ENCODE measurements at regions of chr18 and their contacts with region 1.

Region 1: DNA sequence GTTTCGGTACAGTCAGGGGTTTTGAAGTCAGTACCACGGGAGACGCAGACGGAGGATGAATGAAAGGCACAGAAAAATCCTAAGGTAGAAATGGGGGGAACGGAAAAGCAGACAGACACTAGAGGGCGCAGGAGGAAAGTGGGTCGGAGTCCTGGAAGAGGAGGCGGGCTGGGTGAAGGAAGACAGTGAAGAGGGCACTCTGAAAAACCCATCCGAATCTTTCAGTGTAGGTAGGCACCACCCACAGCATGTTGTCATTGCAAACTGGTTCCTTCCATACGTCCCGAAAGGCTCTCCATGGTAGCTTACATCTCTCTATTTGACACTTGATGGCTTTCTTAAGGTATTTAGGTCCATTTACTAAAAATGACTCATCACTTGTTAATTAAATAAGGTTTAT is 18.5 kb upstream of the ZNF236 start:
- DNase-seq: peak; percentile 52 to 84 (median 68)
- ATAC-seq: peak; percentile 85
- H3K4me3 ChIP-seq: no peak overlapping the region
- H3K4me3 Mint-ChIP-seq: no peak overlapping the region
- H3K27ac ChIP-seq: no peak overlapping the region
- H3K27ac Mint-ChIP-seq: no peak overlapping the region
- H3K4me1 ChIP-seq: peaks cover 18% of the 10 kb centered on the region
- H3K4me1 Mint-ChIP-seq: peaks cover 15% of the 10 kb centered on the region
- H3K27me3 ChIP-seq: peaks cover 0 to 10% of the 10 kb centered on the region in 2 experiments
- H3K27me3 Mint-ChIP-seq: peaks cover 7% of the 10 kb centered on the region
- CTCF ChIP-seq: peak; percentile 87

Region 2: DNA sequence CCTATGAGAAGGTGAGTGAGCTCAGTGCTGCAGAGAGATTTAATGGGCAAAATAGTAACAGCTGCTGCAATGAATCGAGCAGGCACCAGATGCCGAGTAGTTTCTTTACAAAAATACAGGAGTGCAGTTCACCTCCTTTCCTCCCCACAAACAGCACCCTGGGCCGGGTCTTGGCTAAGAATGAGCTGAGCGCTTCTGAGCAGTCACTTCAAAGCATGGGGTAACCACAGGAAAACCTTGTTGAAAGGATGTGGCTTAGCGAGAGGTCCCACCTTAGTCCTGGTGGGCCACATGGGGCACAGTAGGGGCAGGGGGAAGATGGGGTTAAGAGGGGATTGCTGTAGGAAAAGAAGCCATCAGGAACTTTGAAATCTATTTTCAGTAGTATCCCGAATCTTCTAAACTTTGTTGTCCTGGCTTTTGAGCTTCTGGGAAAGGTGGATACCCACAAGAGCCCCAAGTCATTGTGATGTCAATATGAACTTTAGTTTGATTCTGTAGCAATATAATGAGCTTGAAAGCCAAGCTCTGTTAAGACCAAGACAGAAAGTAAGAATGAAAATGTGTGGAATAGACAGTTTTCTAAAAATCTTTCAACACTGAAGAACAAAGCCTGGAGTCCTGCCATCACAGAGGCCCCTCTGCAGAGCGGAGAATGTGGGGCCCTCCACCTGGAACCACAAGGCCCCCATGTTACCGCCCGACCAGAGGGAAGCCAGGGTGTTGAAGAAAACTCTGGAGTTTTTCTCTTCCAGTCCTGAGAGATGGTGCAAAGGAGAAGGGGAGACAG is 82.4 kb before region 1 on chr18:
- CTCF ChIA-PET with region 1: no interaction called
- POLR2A ChIA-PET with region 1: interaction called, 7 read pairs
- intact Hi-C with region 1: loop called in 1 of 2 experiments (anchors 5 kb)
- DNase-seq: peak; percentile 27 to 90 (median 58)
- ATAC-seq: peak; percentile 92
- H3K4me3 ChIP-seq: peak overlapping the region; percentile 29
- H3K4me3 Mint-ChIP-seq: peak overlapping the region; percentile 76
- H3K27ac ChIP-seq: no peak overlapping the region
- H3K27ac Mint-ChIP-seq: peak overlapping the region; percentile 76
- H3K4me1 ChIP-seq: peaks cover 60% of the 10 kb centered on the region
- H3K4me1 Mint-ChIP-seq: peaks cover 57% of the 10 kb centered on the region
- H3K27me3 ChIP-seq: no peaks in the 10 kb centered on the region
- H3K27me3 Mint-ChIP-seq: no peaks in the 10 kb centered on the region
- CTCF ChIP-seq: no peak

Region 3: DNA sequence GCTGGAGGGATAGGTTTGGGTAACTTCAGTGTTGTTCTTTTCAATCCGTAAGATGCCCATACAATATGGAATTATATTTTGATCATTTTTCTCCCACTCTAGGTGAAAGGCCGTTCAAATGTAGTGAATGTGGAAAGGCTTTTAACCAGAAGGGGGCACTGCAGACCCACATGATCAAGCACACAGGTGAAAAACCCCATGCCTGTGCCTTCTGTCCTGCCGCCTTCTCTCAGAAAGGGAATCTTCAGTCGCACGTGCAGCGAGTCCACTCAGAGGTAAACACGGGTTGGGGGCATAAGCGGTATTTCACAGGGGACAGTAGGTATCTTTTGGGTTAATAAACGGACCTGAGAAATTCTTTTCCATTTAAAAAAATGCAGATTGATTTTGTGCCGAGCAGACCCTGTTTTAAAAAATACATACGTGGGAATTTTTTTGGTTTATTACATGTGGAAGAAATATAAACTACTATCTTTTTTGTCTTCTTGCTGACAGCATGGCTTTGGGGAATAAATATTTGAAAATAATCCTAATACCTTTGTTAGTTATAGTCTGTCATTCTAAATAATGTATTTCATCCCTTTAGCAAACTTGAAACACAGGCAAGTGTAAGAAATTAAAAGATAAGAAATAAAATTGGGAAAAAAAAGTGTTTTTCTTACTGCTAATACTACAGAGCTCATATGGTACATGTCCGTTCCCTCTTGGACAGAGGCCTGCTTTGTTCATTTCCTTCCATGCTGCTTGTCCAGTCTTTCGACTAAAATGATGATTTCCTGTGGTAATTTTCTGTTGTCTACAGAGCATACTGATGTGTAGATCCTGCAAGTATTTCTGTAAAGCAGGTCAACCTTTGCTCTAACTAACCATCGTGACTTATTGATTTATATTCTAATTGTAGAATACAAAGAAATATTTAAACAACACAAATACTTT is 71.8 kb after region 1 on chr18:
- CTCF ChIA-PET with region 1: interaction called, 3 read pairs
- POLR2A ChIA-PET with region 1: no interaction called
- intact Hi-C with region 1: loop called (anchors 1 to 2 kb)
- DNase-seq: peak in 7 of 14 experiments; percentile 14 to 67 (median 51)
- ATAC-seq: peak; percentile 51
- H3K4me3 ChIP-seq: no peak overlapping the region
- H3K4me3 Mint-ChIP-seq: no peak overlapping the region
- H3K27ac ChIP-seq: no peak overlapping the region
- H3K27ac Mint-ChIP-seq: peak overlapping the region; percentile 60
- H3K4me1 ChIP-seq: peaks cover 4% of the 10 kb centered on the region
- H3K4me1 Mint-ChIP-seq: peaks cover 13% of the 10 kb centered on the region
- H3K27me3 ChIP-seq: no peaks in the 10 kb centered on the region
- H3K27me3 Mint-ChIP-seq: no peaks in the 10 kb centered on the region
- CTCF ChIP-seq: peak; percentile 55

Region 4: GRCh38 chr18:76963936-76964335 is 160.1 kb after region 1 on chr18:
- CTCF ChIA-PET with region 1: no interaction called
- POLR2A ChIA-PET with region 1: no interaction called
- intact Hi-C with region 1: no loop called
- DNase-seq: peak in 1 of 14 experiments; percentile 41
- ATAC-seq: no peak
- H3K4me3 ChIP-seq: no peak overlapping the region
- H3K4me3 Mint-ChIP-seq: no peak overlapping the region
- H3K27ac ChIP-seq: no peak overlapping the region
- H3K27ac Mint-ChIP-seq: peak overlapping the region; percentile 19
- H3K4me1 ChIP-seq: no peaks in the 10 kb centered on the region
- H3K4me1 Mint-ChIP-seq: peaks cover 36% of the 10 kb centered on the region
- H3K27me3 ChIP-seq: no peaks in the 10 kb centered on the region
- H3K27me3 Mint-ChIP-seq: no peaks in the 10 kb centered on the region
- CTCF ChIP-seq: no peak

Region 5: DNA sequence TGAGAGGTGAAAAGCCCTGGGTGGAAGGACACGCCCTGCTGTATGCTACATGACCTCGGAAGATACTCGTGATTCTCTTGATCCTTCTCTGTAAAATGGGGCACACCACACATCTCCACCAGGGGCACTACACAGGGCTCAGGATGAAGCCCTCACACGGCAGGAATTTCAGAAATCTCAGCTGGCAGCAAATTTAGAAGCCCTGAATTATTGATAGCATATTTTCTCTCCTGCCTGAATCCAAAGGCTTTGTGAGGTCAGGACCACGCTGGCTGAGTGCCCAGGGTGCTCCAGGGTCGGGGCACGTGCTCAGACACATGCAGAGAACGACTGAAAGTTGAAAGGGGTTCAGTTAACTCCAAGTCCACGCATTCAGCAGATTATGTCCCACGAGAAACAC is 403.7 kb after region 1 on chr18:
- CTCF ChIA-PET with region 1: no interaction called
- POLR2A ChIA-PET with region 1: no interaction called
- intact Hi-C with region 1: loop called in 1 of 2 experiments (anchors 10 kb)
- DNase-seq: peak; percentile 19 to 84 (median 54)
- ATAC-seq: peak; percentile 97
- H3K4me3 ChIP-seq: no peak overlapping the region
- H3K4me3 Mint-ChIP-seq: peak overlapping the region; percentile 92
- H3K27ac ChIP-seq: no peak overlapping the region
- H3K27ac Mint-ChIP-seq: peak overlapping the region; percentile 78
- H3K4me1 ChIP-seq: peaks cover 33% of the 10 kb centered on the region
- H3K4me1 Mint-ChIP-seq: peaks cover 51% of the 10 kb centered on the region
- H3K27me3 ChIP-seq: no peaks in the 10 kb centered on the region
- H3K27me3 Mint-ChIP-seq: no peaks in the 10 kb centered on the region
- CTCF ChIP-seq: peak; percentile 76

Region 6: GRCh38 chr18:77702686-77703085 is 898.9 kb after region 1 on chr18:
- CTCF ChIA-PET with region 1: no interaction called
- POLR2A ChIA-PET with region 1: no interaction called
- intact Hi-C with region 1: loop called in 1 of 2 experiments (anchors 5 kb)
- DNase-seq: peak in 3 of 14 experiments; percentile 13 to 40 (median 32)
- ATAC-seq: no peak
- H3K4me3 ChIP-seq: no peak overlapping the region
- H3K4me3 Mint-ChIP-seq: no peak overlapping the region
- H3K27ac ChIP-seq: no peak overlapping the region
- H3K27ac Mint-ChIP-seq: no peak overlapping the region
- H3K4me1 ChIP-seq: no peaks in the 10 kb centered on the region
- H3K4me1 Mint-ChIP-seq: no peaks in the 10 kb centered on the region
- H3K27me3 ChIP-seq: peaks cover 0 to 11% of the 10 kb centered on the region in 2 experiments
- H3K27me3 Mint-ChIP-seq: peaks cover 38% of the 10 kb centered on the region
- CTCF ChIP-seq: no peak

Measured in CD4-positive, alpha-beta T cell (primary cell).